ENCODE measurements at regions of chr14 and their contacts with region 1.

Region 1: GRCh38 chr14:69153131-69153872 is 383 bp upstream of the DCAF5 start:
- DNase-seq: peak; percentile 92
- H3K4me3 ChIP-seq: peak overlapping the region; percentile 59 to 92 (median 83)
- H3K27ac ChIP-seq: peak overlapping the region; percentile 47
- H3K4me1 ChIP-seq: peaks cover 30% of the 10 kb centered on the region
- H3K27me3 ChIP-seq: no peaks in the 10 kb centered on the region
- CTCF ChIP-seq: no peak

Region 2: DNA sequence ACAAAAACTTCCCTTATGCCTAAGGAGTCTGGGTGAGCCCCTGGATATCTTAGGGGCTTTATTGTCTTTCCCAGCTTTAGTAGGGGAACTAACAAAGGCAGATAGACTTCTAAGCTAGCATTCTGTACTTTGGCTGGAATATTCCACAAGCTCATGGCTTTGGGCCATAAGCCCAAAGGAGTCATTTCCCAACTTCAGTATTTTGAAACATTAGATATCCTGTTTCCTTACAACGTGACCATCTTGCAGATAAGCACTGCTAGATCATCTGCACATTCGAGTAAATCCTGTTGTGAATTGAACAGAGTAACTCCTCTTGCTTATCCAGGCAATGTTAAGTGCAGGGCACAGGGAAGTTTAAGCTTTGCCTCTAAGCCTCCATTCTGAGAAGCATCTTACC is 103.6 kb before region 1 on chr14:
- CTCF ChIA-PET with region 1: no interaction called
- dilution Hi-C with region 1: loop called (anchors 5 kb)
- in situ Hi-C with region 1: no loop called
- intact Hi-C with region 1: no loop called
- DNase-seq: no peak
- H3K4me3 ChIP-seq: no peak overlapping the region
- H3K27ac ChIP-seq: no peak overlapping the region
- H3K4me1 ChIP-seq: peaks cover 8% of the 10 kb centered on the region
- H3K27me3 ChIP-seq: no peaks in the 10 kb centered on the region
- CTCF ChIP-seq: no peak

Region 3: GRCh38 chr14:69191340-69192111 is 38.2 kb after region 1 on chr14 and contains the start of gene EXD2:
- CTCF ChIA-PET with region 1: no interaction called
- dilution Hi-C with region 1: loop called (anchors 5 kb)
- in situ Hi-C with region 1: no loop called
- intact Hi-C with region 1: loop called (anchors 1 kb)
- DNase-seq: peak; percentile 92
- H3K4me3 ChIP-seq: peak within 1 kb of the TSS; percentile 76 to 98 (median 86)
- H3K27ac ChIP-seq: peak within 1 kb of the TSS; percentile 71
- H3K4me1 ChIP-seq: peaks cover 4% of the 10 kb centered on the region
- H3K27me3 ChIP-seq: no peaks in the 10 kb centered on the region
- CTCF ChIP-seq: no peak
- total RNA-seq, gene EXD2: 28.8 to 30.2 TPM

Region 4: DNA sequence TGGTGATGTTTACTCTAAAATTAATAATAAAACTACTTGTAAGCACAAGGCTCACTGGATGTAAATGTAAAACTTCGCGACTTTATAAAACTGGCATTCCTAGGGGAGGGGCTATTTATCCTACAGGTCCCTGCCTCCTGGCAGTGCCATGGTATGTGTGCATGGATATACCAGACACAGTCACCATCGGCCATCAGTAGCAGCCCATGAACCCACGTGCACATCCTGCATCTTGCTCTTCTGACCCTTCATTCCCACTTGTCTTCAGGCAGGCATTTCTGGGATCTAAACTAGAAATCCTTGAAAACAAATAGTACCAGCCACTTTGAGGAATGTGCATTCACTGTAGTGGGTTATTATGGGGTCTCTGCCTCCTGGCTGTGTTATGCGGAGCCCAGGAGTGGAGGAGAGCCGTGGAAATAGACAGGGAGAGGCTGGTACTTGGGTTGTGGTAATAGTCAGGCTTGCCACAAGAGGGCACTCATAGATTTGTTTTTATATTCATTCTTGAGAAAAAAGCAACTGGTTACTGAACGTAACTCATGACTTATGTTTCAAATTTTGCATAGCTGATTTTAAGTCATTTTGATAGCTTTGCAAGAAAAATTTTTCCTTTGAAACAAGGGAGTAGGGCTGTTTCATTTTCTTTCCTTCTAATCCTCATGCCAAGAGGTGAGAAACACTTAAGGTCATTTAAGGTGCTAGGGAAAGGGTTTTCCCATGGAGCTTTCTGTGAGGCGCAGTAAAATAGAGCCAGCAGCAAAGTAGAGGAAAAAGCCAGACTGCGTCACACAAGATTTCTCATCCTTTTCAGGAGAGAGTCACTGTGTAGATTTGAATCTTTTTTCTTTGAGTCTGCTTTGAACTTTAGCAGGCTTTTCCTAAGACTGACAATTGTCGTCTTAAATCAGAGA is 89.3 kb after region 1 on chr14:
- CTCF ChIA-PET with region 1: no interaction called
- dilution Hi-C with region 1: no loop called
- in situ Hi-C with region 1: no loop called
- intact Hi-C with region 1: no loop called
- DNase-seq: peak; percentile 32
- H3K4me3 ChIP-seq: no peak overlapping the region
- H3K27ac ChIP-seq: no peak overlapping the region
- H3K4me1 ChIP-seq: no peaks in the 10 kb centered on the region
- H3K27me3 ChIP-seq: no peaks in the 10 kb centered on the region
- CTCF ChIP-seq: peak; percentile 62 to 66